Activated CD4-positive, alpha-beta memory T cell treated with anti-CD3 and anti-CD28 coated beads, Interleukin-2, amount 10 ng/mL, durations not matched to agents 7 days and 5 days (primary cell): ENCODE measurements at regions of chr19 and their contacts with region 1.

Region 1: GRCh38 chr19:48899781-48900476 is at the start of gene NUCB1:
- DNase-seq: peak; percentile 100
- H3K4me3 Mint-ChIP-seq: peak within 1 kb of the TSS; percentile 96
- H3K27ac Mint-ChIP-seq: peak within 1 kb of the TSS; percentile 94
- H3K4me1 Mint-ChIP-seq: peaks cover 39% of the 10 kb centered on the region
- H3K27me3 Mint-ChIP-seq: peaks cover 6% of the 10 kb centered on the region
- total RNA-seq, gene NUCB1: 287 to 300 TPM

Region 2: DNA sequence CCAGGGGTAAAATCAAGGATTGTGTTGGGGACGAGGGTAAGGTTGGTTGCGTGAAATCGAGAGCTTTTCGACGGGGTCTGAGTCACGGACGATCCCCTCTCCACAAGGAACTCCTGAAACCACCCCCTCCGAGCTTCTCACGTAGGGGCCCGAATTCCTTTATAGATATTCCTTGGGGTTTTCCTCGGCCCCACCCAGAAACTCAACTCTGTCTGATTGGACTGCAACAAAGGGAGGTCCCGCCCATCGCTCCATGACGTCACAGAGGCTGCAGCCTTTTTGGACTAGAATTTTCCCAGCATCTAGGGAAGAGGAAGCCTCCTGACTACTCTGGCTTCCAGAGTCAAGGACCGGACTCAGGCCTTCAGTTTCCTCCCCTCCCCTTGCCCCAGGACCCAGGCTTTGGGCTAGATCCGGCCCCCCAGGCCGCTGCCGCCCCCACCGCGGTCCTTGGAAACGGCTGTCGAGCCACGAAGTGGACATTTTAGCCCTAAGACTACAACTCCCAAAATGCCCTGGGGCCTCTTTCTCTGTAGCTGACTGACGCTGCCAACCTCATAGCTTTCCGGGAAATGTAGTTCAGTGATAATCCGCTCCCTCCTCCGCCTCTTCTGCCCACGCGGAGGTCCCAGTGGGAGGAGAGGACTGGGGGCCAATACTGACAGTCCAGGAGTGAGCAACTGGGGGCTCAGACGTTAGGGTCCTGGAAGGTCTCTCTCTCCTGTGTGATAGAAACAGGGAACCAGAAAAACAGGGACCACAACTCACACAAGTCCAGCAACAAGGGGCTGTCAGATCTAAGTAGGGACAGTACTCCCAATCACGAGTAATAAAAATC is 153.0 kb before region 1 on chr19 and contains the start of gene IZUMO1:
- CTCF ChIA-PET with region 1: no interaction called
- POLR2A ChIA-PET with region 1: no interaction called
- DNase-seq: peak; percentile 67
- H3K4me3 Mint-ChIP-seq: no peak within 1 kb of the TSS
- H3K27ac Mint-ChIP-seq: no peak within 1 kb of the TSS
- H3K4me1 Mint-ChIP-seq: peaks cover 18% of the 10 kb centered on the region
- H3K27me3 Mint-ChIP-seq: peaks cover 10% of the 10 kb centered on the region
- total RNA-seq, gene IZUMO1: not detected

Region 3: GRCh38 chr19:48872182-48872883 is 27.6 kb before region 1 on chr19 and contains the start of gene PPP1R15A:
- CTCF ChIA-PET with region 1: interaction called, 10 read pairs
- POLR2A ChIA-PET with region 1: interaction called, 125 read pairs
- DNase-seq: peak; percentile 99
- H3K4me3 Mint-ChIP-seq: peak within 1 kb of the TSS; percentile 88
- H3K27ac Mint-ChIP-seq: peak within 1 kb of the TSS; percentile 91
- H3K4me1 Mint-ChIP-seq: peaks cover 44% of the 10 kb centered on the region
- H3K27me3 Mint-ChIP-seq: peaks cover 6% of the 10 kb centered on the region
- total RNA-seq, gene PPP1R15A: 77.2 to 81.4 TPM

Region 4: DNA sequence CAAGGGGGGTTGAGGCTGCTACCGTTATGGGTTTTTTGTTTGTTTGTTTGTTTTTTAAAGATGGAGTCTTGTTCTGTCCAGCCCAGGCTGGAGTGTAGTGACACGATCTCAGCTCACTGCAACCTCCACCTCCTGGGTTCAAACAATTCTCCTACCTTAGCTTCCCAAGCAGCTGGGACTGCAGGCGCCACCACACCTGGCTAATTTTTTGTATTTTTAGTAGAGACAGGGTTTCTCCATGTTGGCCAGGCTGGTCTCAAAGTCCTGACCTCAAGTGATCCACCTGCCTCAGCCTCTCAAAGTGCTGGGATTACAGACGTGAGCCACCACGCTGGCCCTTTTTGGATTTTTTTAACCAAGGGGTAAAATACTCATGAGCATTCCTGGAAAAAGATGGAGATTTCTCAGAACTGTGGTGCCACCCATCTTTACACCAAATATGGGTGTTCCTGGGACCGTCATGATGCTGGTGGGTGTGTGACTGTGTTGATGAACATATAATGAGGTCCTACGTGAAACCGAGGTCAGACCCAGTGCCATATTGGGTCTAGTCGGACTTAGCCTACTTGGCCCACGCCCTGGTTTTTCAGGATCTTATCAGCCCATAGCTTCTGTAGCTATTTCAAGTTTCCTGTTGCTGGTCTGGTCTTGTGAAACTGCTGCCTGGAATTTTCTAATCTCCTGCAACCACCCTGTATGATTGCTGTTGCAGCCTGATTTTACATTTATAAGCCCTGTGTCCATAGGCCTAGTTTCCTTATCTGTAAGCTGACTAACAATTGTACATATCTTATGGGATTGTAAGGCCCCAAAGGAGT is 21.5 kb before region 1 on chr19:
- CTCF ChIA-PET with region 1: interaction called, 10 read pairs
- POLR2A ChIA-PET with region 1: interaction called, 125 read pairs
- DNase-seq: peak; percentile 46
- H3K4me3 Mint-ChIP-seq: no peak overlapping the region
- H3K27ac Mint-ChIP-seq: peak overlapping the region; percentile 63
- H3K4me1 Mint-ChIP-seq: peaks cover 47% of the 10 kb centered on the region
- H3K27me3 Mint-ChIP-seq: no peaks in the 10 kb centered on the region

Region 5: DNA sequence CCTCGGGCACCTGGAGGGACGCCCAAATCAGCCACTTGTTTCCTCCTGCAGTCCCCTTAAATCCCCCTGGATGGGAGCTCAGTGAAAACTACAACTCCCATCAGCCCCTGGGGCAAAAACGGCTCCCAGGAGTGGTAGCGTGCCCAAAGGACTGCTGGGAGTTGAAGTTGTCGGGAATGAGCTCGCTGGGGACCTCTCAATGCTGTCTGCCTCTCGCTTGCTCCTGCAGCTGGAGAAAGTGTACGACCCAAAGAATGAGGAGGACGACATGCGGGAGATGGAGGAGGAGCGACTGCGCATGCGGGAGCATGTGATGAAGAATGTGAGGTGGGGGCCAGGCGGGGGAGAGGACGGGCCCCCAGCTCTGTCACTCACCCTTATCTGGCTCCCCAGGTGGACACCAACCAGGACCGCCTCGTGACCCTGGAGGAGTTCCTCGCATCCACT is 18.9 kb after region 1 on chr19:
- CTCF ChIA-PET with region 1: no interaction called
- POLR2A ChIA-PET with region 1: interaction called, 10 read pairs
- DNase-seq: peak; percentile 29
- H3K4me3 Mint-ChIP-seq: no peak overlapping the region
- H3K27ac Mint-ChIP-seq: no peak overlapping the region
- H3K4me1 Mint-ChIP-seq: no peaks in the 10 kb centered on the region
- H3K27me3 Mint-ChIP-seq: no peaks in the 10 kb centered on the region

Region 6: DNA sequence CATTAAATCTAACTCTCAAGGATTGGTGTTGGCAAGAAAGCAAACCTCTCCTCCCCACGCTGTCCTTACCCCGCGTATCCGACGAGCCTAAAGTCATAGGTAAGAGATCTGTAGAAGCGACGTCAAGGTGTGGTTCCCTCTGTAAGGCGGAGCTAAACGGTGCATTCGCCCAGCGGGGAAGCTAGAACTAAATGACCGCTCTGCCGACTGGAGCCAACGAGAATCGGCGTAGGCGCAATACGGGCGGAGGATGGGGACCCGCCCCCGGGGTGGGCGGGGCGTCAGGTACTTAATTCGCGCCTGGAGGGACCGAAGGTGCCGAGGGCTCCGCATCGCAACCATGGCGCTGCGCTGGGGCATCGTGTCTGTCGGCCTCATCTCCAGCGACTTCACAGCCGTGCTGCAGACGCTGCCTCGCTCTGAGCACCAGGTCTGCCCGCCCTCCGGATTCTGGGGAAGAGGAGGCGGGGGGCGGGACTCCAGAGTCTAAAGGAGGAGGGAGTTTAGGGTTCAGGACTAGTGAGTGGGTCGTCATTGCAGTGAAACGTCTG is 33.5 kb after region 1 on chr19 and contains the start of gene DHDH:
- CTCF ChIA-PET with region 1: interaction called, 3 read pairs
- POLR2A ChIA-PET with region 1: interaction called, 10 read pairs
- DNase-seq: peak; percentile 88
- H3K4me3 Mint-ChIP-seq: peak within 1 kb of the TSS; percentile 75
- H3K27ac Mint-ChIP-seq: peak within 1 kb of the TSS; percentile 36
- H3K4me1 Mint-ChIP-seq: peaks cover 20% of the 10 kb centered on the region
- H3K27me3 Mint-ChIP-seq: peaks cover 3% of the 10 kb centered on the region
- total RNA-seq, gene DHDH: 1.6 to 2.9 TPM

Region 7: GRCh38 chr19:48954595-48955310 is 54.8 kb after region 1 on chr19 and contains the start of gene BAX:
- CTCF ChIA-PET with region 1: no interaction called
- POLR2A ChIA-PET with region 1: interaction called, 10 read pairs
- DNase-seq: peak; percentile 96
- H3K4me3 Mint-ChIP-seq: peak within 1 kb of the TSS; percentile 78
- H3K27ac Mint-ChIP-seq: peak within 1 kb of the TSS; percentile 90
- H3K4me1 Mint-ChIP-seq: peaks cover 44% of the 10 kb centered on the region
- H3K27me3 Mint-ChIP-seq: no peaks in the 10 kb centered on the region
- total RNA-seq, gene BAX: 255 to 258 TPM

Region 8: DNA sequence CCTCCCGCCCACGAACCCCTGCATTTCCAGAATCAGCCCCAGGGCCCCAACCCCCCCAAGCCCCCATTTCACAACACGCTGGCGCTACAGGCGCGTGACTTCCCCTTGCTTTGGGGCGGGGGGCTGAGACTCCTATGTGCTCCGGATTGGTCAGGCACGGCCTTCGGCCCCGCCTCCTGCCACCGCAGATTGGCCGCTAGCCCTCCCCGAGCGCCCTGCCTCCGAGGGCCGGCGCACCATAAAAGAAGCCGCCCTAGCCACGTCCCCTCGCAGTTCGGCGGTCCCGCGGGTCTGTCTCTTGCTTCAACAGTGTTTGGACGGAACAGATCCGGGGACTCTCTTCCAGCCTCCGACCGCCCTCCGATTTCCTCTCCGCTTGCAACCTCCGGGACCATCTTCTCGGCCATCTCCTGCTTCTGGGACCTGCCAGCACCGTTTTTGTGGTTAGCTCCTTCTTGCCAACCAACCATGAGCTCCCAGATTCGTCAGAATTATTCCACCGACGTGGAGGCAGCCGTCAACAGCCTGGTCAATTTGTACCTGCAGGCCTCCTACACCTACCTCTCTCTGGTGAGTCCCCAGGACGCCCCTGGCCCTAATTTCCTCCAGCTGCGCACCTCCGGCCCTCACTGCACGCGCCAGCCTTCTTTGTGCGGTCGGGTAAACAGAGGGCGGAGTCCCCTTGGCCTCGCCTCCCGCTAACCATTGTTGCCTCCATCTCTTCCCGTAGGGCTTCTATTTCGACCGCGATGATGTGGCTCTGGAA is 65.3 kb after region 1 on chr19 and contains the start of gene FTL:
- CTCF ChIA-PET with region 1: interaction called, 3 read pairs
- POLR2A ChIA-PET with region 1: interaction called, 31 read pairs
- DNase-seq: peak; percentile 92
- H3K4me3 Mint-ChIP-seq: peak within 1 kb of the TSS; percentile 92
- H3K27ac Mint-ChIP-seq: peak within 1 kb of the TSS; percentile 94
- H3K4me1 Mint-ChIP-seq: peaks cover 72% of the 10 kb centered on the region
- H3K27me3 Mint-ChIP-seq: no peaks in the 10 kb centered on the region
- total RNA-seq, gene FTL: 1,110 to 1,123 TPM